ENCODE measurements at regions of chr5 and their contacts with region 1.

Region 1: DNA sequence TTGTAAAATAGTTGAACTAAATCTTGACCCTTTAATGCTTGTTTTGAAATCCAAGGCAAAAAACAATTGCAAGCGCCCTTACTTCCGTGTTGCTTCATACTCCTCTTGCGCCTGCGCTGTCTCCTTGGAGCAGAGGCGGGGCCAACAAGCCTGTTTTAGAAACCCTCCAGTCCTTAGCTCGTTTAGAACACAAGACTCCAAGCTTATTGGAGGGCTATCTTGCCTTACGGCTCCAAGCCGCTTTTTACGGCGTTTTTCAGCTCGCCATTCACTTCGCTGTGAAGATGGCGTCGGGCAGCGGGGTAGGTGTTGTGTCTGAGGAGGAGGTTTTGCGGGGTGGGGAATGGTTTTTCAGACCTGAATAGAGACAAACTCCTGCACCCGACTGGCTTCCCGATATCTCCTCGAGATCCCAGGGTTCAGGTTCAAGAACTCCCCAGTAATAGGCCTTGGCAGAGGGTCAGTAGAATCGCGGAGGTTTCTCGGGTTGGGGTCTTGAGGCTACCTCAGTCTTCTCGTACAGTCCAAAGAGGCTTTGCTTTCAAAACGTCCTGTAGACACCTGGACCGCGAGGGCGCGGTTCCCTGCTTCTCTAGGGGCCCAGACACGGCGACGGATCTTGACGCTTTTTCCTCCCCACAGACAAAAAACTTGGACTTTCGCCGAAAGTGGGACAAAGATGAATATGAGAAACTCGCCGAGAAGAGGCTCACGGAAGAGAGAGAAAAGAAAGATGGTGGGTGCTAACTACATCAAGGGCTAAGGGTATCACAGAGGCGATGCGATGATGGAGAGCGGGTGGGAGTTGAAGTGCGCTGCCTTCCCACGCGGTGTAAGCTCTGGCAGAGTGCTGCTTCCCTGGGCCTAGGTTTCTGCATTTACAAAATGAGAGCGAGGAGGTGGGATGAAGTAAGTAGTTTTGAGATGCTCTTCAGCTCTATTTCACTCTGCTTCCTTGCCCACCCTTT is at the start of gene ZMAT2:
- DNase-seq: peak; percentile 96
- ATAC-seq: peak; percentile 99
- H3K4me3 ChIP-seq: peak within 1 kb of the TSS; percentile 58 to 97 (median 92)
- H3K4me3 Mint-ChIP-seq: peak within 1 kb of the TSS; percentile 96
- H3K27ac ChIP-seq: peak within 1 kb of the TSS; percentile 46 to 77
- H3K27ac Mint-ChIP-seq: peak within 1 kb of the TSS; percentile 91
- H3K4me1 ChIP-seq: peaks cover 13 to 16% of the 10 kb centered on the region in 2 donors
- H3K4me1 Mint-ChIP-seq: peaks cover 23% of the 10 kb centered on the region
- H3K27me3 ChIP-seq: no peaks in the 10 kb centered on the region
- H3K27me3 Mint-ChIP-seq: no peaks in the 10 kb centered on the region
- CTCF ChIP-seq: no peak
- total RNA-seq, gene ZMAT2: 55.7 and 55.8 TPM in 2 replicates

Region 2: GRCh38 chr5:140547508-140548299 is 152.8 kb before region 1 on chr5 and contains the start of gene EIF4EBP3:
- CTCF ChIA-PET with region 1: interaction called, 3 read pairs
- POLR2A ChIA-PET with region 1: interaction called, 3 read pairs
- intact Hi-C with region 1: loop called (anchors 5 kb)
- DNase-seq: peak; percentile 91
- ATAC-seq: peak; percentile 97
- H3K4me3 ChIP-seq: peak within 1 kb of the TSS; percentile 35 to 93 (median 79)
- H3K4me3 Mint-ChIP-seq: peak within 1 kb of the TSS; percentile 94
- H3K27ac ChIP-seq: peak within 1 kb of the TSS; percentile 81 to 85
- H3K27ac Mint-ChIP-seq: peak within 1 kb of the TSS; percentile 94
- H3K4me1 ChIP-seq: peaks cover 10 to 30% of the 10 kb centered on the region in 2 donors
- H3K4me1 Mint-ChIP-seq: peaks cover 30% of the 10 kb centered on the region
- H3K27me3 ChIP-seq: no peaks in the 10 kb centered on the region
- H3K27me3 Mint-ChIP-seq: no peaks in the 10 kb centered on the region
- CTCF ChIP-seq: peak; percentile 77
- total RNA-seq, gene EIF4EBP3: 8.8 and 15.0 TPM in 2 replicates

Region 3: GRCh38 chr5:140664359-140665119 is 35.9 kb before region 1 on chr5 and contains the start of gene WDR55:
- CTCF ChIA-PET with region 1: interaction called, 4 read pairs
- POLR2A ChIA-PET with region 1: no interaction called
- intact Hi-C with region 1: loop called (anchors 1 kb)
- DNase-seq: peak; percentile 94
- ATAC-seq: peak; percentile 97
- H3K4me3 ChIP-seq: peak within 1 kb of the TSS; percentile 56 to 99 (median 98)
- H3K4me3 Mint-ChIP-seq: peak within 1 kb of the TSS; percentile 99
- H3K27ac ChIP-seq: peak within 1 kb of the TSS; percentile 74 to 88
- H3K27ac Mint-ChIP-seq: peak within 1 kb of the TSS; percentile 98
- H3K4me1 ChIP-seq: peaks cover 14 to 17% of the 10 kb centered on the region in 2 donors
- H3K4me1 Mint-ChIP-seq: peaks cover 30% of the 10 kb centered on the region
- H3K27me3 ChIP-seq: no peaks in the 10 kb centered on the region
- H3K27me3 Mint-ChIP-seq: no peaks in the 10 kb centered on the region
- CTCF ChIP-seq: no peak
- total RNA-seq, gene WDR55: 44.7 and 46.2 TPM in 2 replicates

Region 4: DNA sequence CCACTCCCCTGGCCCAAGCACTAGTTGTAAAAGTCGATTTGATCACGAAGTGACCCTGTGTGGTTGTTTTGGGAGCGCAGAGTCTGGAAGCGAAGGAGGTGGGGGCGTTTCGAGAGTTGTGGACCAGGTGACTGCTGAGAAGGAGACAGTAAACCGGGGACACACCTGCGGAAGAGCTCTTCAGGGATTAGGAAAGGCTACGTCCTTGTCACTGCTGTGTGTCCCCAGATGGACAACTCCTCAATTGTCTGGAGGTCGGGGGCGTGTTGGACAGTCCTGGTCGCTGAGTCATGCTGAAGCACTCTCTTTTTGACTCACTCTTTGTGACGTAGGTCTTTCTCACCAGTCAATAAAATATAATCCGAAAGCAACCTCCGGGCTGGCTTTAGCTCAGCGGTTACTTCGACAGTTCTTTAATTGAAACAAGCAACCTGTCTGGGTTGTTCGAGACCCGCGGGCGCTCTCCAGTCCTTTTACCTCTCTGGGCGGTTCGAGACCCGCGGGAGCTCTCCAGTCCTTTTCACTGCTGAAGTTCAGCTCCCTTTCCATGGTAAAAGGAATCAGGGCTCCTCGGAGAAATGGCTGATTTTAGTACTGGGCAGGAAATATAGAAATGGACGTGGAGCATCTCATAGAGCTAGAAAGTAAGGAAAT is 10.6 kb after region 1 on chr5:
- CTCF ChIA-PET with region 1: interaction called, 9 read pairs
- POLR2A ChIA-PET with region 1: interaction called, 3 read pairs
- intact Hi-C with region 1: loop called (anchors 1 kb)
- DNase-seq: peak; percentile 96
- ATAC-seq: peak; percentile 85
- H3K4me3 ChIP-seq: peak overlapping the region; percentile 69 to 98 (median 73)
- H3K4me3 Mint-ChIP-seq: peak overlapping the region; percentile 95
- H3K27ac ChIP-seq: peak overlapping the region; percentile 64 to 78
- H3K27ac Mint-ChIP-seq: peak overlapping the region; percentile 96
- H3K4me1 ChIP-seq: peaks cover 5 to 11% of the 10 kb centered on the region in 2 donors
- H3K4me1 Mint-ChIP-seq: peaks cover 14% of the 10 kb centered on the region
- H3K27me3 ChIP-seq: no peaks in the 10 kb centered on the region
- H3K27me3 Mint-ChIP-seq: no peaks in the 10 kb centered on the region
- CTCF ChIP-seq: no peak

Region 5: DNA sequence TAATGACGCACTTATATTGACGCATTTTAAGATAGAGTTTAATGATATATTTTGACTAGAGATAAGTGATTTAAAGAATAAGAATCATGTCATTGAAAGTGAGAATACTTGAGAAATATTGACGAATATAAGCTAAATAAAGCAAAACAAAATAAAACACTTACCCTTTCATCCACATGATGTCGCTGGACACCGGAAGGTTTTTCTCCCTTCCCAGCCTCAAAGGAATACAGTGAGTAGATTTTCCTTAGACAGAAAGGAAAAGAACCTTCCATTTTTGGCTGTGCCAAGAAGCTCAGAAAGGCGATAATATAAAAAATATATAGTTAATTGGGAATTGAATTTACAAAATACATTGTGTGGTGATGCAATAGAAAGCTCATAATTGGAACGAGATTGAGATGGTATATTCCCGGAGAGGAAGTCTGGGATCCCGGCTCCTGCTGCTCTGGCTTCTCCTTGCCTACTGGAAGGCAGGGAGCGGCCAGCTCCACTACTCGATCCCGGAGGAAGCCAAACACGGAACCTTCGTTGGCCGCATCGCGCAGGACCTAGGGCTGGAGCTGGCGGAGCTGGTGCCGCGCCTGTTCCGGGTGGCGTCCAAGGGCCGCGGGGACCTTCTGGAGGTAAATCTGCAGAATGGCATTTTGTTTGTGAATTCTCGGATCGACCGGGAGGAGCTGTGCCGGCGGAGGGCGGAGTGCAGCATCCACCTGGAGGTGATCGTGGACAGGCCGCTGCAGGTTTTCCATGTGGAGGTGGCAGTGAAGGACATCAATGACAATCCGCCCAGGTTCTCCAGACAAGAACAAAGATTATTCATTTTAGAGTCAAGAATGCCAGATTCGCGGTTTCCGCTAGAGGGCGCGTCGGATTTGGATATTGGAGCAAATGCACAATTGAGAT is 121.2 kb after region 1 on chr5 and contains the start of gene PCDHA5:
- CTCF ChIA-PET with region 1: no interaction called
- POLR2A ChIA-PET with region 1: no interaction called
- intact Hi-C with region 1: no loop called
- DNase-seq: no peak
- ATAC-seq: no peak
- H3K4me3 ChIP-seq: no peak within 1 kb of the TSS
- H3K4me3 Mint-ChIP-seq: no peak within 1 kb of the TSS
- H3K27ac ChIP-seq: no peak within 1 kb of the TSS
- H3K27ac Mint-ChIP-seq: no peak within 1 kb of the TSS
- H3K4me1 ChIP-seq: no peaks in the 10 kb centered on the region
- H3K4me1 Mint-ChIP-seq: no peaks in the 10 kb centered on the region
- H3K27me3 ChIP-seq: peaks cover 0 to 4% (median 1%) of the 10 kb centered on the region in 4 experiments
- H3K27me3 Mint-ChIP-seq: peaks cover 9% of the 10 kb centered on the region
- CTCF ChIP-seq: no peak
- total RNA-seq, gene PCDHA5: not detected in 2 replicates

Measured in B cell (primary cell).